Endothelial cell of umbilical vein (primary cell): ENCODE measurements at regions of chr3 and their contacts with region 1.

Region 1: GRCh38 chr3:30042274-30042859 is 564.0 kb upstream of the TGFBR2 start:
- DNase-seq: peak; percentile 88
- H3K4me3 ChIP-seq: no peak overlapping the region
- H3K27ac ChIP-seq: no peak overlapping the region
- H3K4me1 ChIP-seq: peaks cover 25% of the 10 kb centered on the region
- H3K27me3 ChIP-seq: no peaks in the 10 kb centered on the region
- CTCF ChIP-seq: peak; percentile 56
- POLR2A ChIP-seq: no peak

Region 2: GRCh38 chr3:30012941-30013543 is 29.3 kb before region 1 on chr3:
- CTCF ChIA-PET with region 1: interaction called, 21 read pairs
- POLR2A ChIA-PET with region 1: no interaction called
- dilution Hi-C with region 1: no loop called
- intact Hi-C with region 1: loop called (anchors 1 kb)
- DNase-seq: peak; percentile 76
- H3K4me3 ChIP-seq: no peak overlapping the region
- H3K27ac ChIP-seq: no peak overlapping the region
- H3K4me1 ChIP-seq: peaks cover 5% of the 10 kb centered on the region
- H3K27me3 ChIP-seq: no peaks in the 10 kb centered on the region
- CTCF ChIP-seq: peak; percentile 55 to 56
- POLR2A ChIP-seq: no peak

Region 3: DNA sequence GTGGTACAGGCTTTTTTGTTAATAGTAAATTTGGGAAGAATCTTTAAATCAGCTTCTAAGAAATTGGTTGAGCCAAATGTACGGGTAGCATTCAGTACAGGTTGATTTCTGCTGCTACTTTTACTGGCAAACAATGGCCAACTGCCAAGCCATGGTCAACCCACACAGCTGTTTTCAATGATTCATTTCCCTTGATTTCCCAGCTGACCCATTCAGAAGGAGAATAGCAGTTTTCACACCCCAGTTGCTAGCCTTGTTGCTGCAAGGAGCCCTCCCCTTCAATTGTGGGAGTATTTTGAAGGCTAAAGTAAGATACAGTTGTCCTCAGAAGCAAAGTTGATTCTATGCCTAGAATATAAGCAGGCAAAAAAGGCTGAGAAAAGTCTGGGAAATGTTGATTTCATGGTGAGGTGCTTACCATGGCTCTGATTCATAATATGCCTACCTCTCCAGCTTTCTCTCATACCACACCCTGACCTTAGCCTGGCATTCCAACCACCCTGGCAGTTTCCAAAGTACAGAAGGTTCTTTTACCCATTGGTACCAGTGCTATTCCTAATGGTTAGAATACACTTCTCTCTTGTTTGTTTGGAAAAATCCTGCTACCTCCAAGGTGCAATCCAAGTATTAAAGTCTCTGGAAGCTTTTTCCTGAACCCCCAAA is 243.8 kb after region 1 on chr3:
- CTCF ChIA-PET with region 1: interaction called, 5 read pairs
- POLR2A ChIA-PET with region 1: no interaction called
- dilution Hi-C with region 1: no loop called
- intact Hi-C with region 1: loop called (anchors 2 kb)
- DNase-seq: peak; percentile 99
- H3K4me3 ChIP-seq: no peak overlapping the region
- H3K27ac ChIP-seq: peak overlapping the region; percentile 60
- H3K4me1 ChIP-seq: peaks cover 70% of the 10 kb centered on the region
- H3K27me3 ChIP-seq: no peaks in the 10 kb centered on the region
- CTCF ChIP-seq: no peak
- POLR2A ChIP-seq: peak; percentile 61

Region 4: GRCh38 chr3:30518181-30518864 is 476.0 kb after region 1 on chr3:
- CTCF ChIA-PET with region 1: interaction called, 11 read pairs
- POLR2A ChIA-PET with region 1: no interaction called
- dilution Hi-C with region 1: no loop called
- intact Hi-C with region 1: loop called (anchors 5 kb)
- DNase-seq: peak; percentile 99
- H3K4me3 ChIP-seq: no peak overlapping the region
- H3K27ac ChIP-seq: peak overlapping the region; percentile 93
- H3K4me1 ChIP-seq: peaks cover 66% of the 10 kb centered on the region
- H3K27me3 ChIP-seq: no peaks in the 10 kb centered on the region
- CTCF ChIP-seq: peak; percentile 17 to 37
- POLR2A ChIP-seq: peak; percentile 81

Region 5: DNA sequence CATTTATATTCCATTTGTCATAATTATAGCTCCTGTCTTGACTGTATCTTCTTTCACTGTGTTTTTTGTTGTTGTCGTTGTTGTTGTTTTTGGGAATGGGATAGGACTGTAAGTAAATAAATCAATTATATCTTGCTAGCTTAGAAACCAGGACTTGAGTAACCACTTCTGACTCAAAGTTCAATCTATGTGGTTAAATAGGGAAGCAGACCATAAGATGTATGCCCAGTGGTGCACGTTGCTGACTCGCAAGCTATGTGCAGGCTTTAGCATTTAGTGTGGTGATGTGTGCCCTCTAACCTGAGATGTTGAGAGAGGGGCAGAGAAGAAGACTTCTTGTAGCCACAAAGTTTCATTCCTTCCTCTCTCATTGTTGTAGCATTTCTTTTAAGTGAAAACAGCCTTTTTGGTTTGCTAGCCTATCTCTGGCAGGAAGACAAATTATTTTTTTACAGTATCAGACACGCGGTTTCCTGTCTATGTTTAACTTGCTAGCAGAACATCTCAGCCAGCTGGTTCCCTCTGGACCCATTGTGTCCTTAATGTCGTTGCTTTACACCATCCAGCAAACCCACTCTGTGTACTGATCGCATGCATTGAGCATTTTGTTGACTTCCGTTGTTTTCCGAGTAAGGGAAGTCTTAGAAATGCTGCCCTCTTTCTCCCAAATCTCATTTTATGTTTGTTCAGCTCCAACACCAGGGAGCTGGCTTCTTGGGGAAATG is 616.1 kb after region 1 on chr3:
- CTCF ChIA-PET with region 1: interaction called, 13 read pairs
- POLR2A ChIA-PET with region 1: no interaction called
- dilution Hi-C with region 1: no loop called
- intact Hi-C with region 1: no loop called
- DNase-seq: peak; percentile 95
- H3K4me3 ChIP-seq: no peak overlapping the region
- H3K27ac ChIP-seq: peak overlapping the region; percentile 98
- H3K4me1 ChIP-seq: peaks cover 100% of the 10 kb centered on the region
- H3K27me3 ChIP-seq: no peaks in the 10 kb centered on the region
- CTCF ChIP-seq: no peak
- POLR2A ChIP-seq: peak; percentile 68

Region 6: DNA sequence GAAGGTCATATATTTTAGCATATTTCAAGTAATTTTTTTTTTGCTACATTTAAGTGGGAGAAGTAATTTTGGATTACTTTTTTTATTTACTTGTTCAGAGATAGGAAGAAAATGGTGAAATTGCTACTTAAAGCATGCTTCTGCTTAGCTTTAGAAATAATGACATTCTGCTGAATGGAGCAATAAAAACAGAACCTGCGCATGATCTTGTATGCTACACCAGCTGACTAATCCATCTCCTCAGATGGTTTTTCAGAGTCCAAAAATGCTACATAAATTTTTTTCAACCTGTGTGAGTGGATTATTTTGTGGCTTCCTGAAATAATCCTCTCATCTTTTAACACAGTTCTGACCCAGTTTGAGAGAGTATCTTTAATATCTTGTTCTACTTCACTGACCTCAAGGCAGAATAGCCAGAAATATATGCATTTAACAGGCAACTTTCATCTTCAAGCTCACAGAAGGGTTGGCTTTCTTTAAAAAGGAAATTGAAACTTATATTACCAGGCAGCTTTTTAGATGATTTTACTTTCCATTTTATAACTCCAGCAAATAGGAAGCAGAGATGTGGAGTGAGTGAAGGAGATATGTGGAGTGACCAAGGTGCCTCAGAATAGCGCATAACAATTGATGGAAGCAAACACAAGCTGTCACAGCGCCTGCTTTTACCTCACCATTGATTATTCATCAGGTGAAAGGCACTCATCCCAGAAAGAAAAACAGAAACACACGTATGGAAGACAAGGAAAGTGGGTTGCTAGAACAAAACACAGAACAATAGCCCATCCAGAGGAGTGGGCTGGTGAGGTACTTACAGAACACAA is 700.6 kb after region 1 on chr3:
- CTCF ChIA-PET with region 1: interaction called, 150 read pairs
- POLR2A ChIA-PET with region 1: interaction called, 3 read pairs
- dilution Hi-C with region 1: no loop called
- intact Hi-C with region 1: no loop called
- DNase-seq: no peak
- H3K4me3 ChIP-seq: no peak overlapping the region
- H3K27ac ChIP-seq: no peak overlapping the region
- H3K4me1 ChIP-seq: peaks cover 9% of the 10 kb centered on the region
- H3K27me3 ChIP-seq: no peaks in the 10 kb centered on the region
- CTCF ChIP-seq: no peak
- POLR2A ChIP-seq: no peak